ENCODE measurements at regions of chr11 and their contacts with region 1.

Region 1: GRCh38 chr11:44861849-44862749 is 88.6 kb downstream of the TP53I11 start:
- DNase-seq: peak; percentile 79
- H3K4me3 ChIP-seq: no peak overlapping the region
- H3K27ac ChIP-seq: peak overlapping the region; percentile 68
- H3K4me1 ChIP-seq: peaks cover 14% of the 10 kb centered on the region
- H3K27me3 ChIP-seq: no peaks in the 10 kb centered on the region
- CTCF ChIP-seq: no peak
- POLR2A ChIP-seq: no peak

Region 2: DNA sequence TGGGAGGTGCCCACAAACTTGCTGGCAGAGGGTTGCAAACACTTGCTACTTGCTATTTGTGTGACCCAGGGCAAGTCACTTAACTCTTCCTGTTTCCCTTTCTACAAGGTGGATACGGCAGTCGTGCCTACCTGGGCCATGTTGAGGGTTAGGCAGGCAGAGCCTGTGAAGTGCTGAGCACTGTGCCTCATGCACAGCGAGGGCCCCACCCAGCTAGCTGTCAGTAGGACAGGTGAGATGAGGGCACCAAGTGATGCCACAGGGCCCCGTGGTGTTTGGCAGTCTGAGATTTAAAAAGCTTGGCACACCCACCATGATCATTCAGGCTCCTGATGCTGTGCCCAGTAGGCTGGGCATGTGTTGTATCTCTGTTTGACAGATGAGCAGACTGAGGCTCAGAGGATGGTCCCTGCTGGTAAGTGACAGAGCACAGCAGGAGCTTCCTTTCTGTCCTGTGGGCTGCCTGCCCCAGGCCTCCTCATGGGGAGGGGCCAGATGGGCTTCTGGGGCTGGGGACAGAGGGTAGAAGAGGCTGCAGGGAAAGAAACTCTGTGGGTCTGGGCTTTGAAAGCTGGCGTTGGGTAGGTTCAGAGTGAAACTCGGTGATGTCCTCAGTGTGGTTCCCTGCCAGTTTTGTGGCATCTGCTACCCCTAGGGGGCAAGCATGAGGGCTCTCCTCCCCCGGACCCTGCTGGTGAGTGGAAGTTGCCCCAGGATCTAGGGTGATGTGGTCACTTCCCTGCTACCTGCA is 76.1 kb before region 1 on chr11:
- CTCF ChIA-PET with region 1: no interaction called
- POLR2A ChIA-PET with region 1: no interaction called
- dilution Hi-C with region 1: no loop called
- intact Hi-C with region 1: loop called (anchors 5 kb)
- DNase-seq: no peak
- H3K4me3 ChIP-seq: no peak overlapping the region
- H3K27ac ChIP-seq: no peak overlapping the region
- H3K4me1 ChIP-seq: peaks cover 15% of the 10 kb centered on the region
- H3K27me3 ChIP-seq: no peaks in the 10 kb centered on the region
- CTCF ChIP-seq: peak; percentile 6 to 44
- POLR2A ChIP-seq: no peak